ENCODE measurements at regions of chr10 and their contacts with region 1.

Region 1: DNA sequence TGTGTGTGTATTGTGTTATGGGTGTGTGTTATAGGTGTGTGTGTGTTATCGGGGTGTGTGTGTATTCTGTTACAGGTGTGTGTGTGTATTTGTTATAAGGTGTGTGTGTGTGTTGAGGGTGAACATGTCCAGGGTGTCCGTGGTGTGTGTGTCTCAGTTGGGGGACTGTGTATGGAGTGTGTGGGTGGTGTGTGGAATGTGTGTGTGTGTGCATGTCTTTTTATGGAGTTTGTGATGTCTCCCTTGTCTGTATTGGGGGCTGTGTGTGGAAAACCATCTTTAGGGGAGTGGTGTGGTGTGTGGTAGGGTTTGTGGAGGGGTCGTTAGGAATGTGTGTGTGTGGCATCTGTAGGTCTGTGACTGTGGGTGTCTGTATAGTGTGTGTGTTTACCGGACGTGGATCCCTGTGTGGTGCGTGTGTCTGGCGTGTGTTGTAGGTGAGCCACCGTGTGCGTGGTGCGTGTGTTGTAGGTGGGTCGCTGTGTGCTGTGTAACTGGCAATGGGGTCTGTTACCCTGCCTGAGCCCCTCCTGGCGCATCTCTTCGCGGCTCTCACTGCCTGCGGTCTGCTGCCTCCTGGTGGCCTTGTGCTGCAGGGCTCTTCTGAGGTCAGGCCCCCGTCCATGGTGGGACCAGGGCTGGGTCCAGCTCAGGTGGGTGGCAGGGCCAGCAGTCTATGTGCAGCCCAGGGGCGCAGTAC is 61.7 kb downstream of the PALD1 start:
- DNase-seq: peak in 8 of 14 experiments; percentile 3 to 49 (median 16)
- ATAC-seq: no peak
- H3K4me3 ChIP-seq: no peak overlapping the region
- H3K4me3 Mint-ChIP-seq: no peak overlapping the region
- H3K27ac ChIP-seq: no peak overlapping the region
- H3K27ac Mint-ChIP-seq: no peak overlapping the region
- H3K4me1 ChIP-seq: no peaks in the 10 kb centered on the region
- H3K4me1 Mint-ChIP-seq: no peaks in the 10 kb centered on the region
- H3K27me3 ChIP-seq: no peaks in the 10 kb centered on the region
- H3K27me3 Mint-ChIP-seq: no peaks in the 10 kb centered on the region
- CTCF ChIP-seq: peak; percentile 25

Region 2: DNA sequence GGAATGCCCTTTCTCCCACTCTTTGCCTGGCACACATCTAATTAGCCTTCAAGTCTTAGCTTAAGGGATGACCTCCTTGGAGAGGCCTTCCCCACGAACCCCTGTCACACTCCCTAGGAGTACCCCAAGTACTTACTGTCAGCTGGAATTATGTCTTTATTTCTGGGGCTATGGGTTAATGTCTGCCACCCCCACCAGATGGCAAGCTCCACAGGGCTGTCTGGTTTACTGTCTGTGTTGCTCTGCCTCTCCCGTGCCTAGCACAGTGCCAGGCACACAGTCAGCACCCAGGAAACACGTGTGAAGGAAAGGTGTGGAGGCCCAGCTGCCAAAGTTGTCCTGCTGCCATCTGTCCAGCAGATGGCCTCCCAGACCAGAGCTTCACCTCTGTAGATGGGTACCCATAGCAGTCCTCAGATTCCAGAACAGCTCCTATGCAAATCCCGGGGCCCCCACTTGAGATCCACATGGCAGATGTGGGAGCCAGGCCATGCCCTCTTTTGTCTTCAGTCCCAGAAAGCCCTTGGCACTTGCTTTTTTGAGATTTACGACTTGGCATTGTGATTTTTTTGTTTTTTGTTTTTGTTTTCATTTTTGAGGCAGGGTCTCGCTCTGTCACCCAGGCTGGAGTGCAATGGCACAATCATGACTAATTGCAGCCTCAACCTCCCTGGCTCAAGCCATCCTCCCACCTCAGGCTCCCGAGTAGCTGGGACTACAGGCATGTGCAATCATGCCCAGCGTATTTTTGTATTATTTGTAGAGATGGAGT is 78.8 kb before region 1 on chr10:
- CTCF ChIA-PET with region 1: interaction called, 7 read pairs
- POLR2A ChIA-PET with region 1: no interaction called
- intact Hi-C with region 1: loop called in 1 of 2 experiments (anchors 1 kb)
- DNase-seq: peak in 13 of 14 experiments; percentile 30 to 72 (median 39)
- ATAC-seq: peak; percentile 75
- H3K4me3 ChIP-seq: no peak overlapping the region
- H3K4me3 Mint-ChIP-seq: no peak overlapping the region
- H3K27ac ChIP-seq: no peak overlapping the region
- H3K27ac Mint-ChIP-seq: no peak overlapping the region
- H3K4me1 ChIP-seq: peaks cover 12% of the 10 kb centered on the region
- H3K4me1 Mint-ChIP-seq: peaks cover 4% of the 10 kb centered on the region
- H3K27me3 ChIP-seq: peaks cover 16 to 34% of the 10 kb centered on the region in 2 experiments
- H3K27me3 Mint-ChIP-seq: peaks cover 44% of the 10 kb centered on the region
- CTCF ChIP-seq: peak; percentile 87

Region 3: DNA sequence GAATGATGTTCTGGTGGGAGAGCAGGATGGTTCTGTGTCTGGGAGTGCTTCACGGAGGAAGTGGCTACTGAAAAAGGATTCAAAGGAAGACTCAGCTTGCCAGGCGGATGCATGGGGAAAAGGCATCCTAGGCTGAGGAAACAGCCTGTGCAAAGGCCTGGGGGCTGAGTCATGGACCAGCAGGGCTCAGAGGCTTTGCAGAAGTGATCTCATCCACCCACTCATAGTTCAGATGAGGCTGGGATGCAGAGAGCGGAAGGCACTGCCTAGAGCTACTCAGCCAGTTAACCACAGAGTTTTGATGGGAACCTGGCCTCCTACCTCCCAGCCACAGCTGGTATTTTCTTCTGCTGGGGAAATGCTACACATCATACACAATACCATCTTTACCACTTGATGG is 116.2 kb after region 1 on chr10:
- CTCF ChIA-PET with region 1: no interaction called
- POLR2A ChIA-PET with region 1: no interaction called
- intact Hi-C with region 1: no loop called
- DNase-seq: peak in 1 of 14 experiments; percentile 11
- ATAC-seq: no peak
- H3K4me3 ChIP-seq: no peak overlapping the region
- H3K4me3 Mint-ChIP-seq: no peak overlapping the region
- H3K27ac ChIP-seq: no peak overlapping the region
- H3K27ac Mint-ChIP-seq: no peak overlapping the region
- H3K4me1 ChIP-seq: no peaks in the 10 kb centered on the region
- H3K4me1 Mint-ChIP-seq: no peaks in the 10 kb centered on the region
- H3K27me3 ChIP-seq: peaks cover 0 to 2% of the 10 kb centered on the region in 2 experiments
- H3K27me3 Mint-ChIP-seq: peaks cover under 1% of the 10 kb centered on the region
- CTCF ChIP-seq: no peak

Measured in CD4-positive, alpha-beta T cell (primary cell).